Transverse colon (tissue), 4 donors: ENCODE measurements at regions of chr1 and their contacts with region 1.

Region 1: GRCh38 chr1:155172732-155173477 is at the start of gene KRTCAP2:
- DNase-seq: peak; percentile 96
- H3K4me3 ChIP-seq: peak within 1 kb of the TSS; percentile 52 to 91 (median 76)
- H3K27ac ChIP-seq: peak within 1 kb of the TSS; percentile 92 to 95 (median 93)
- H3K4me1 ChIP-seq: peaks cover 15 to 32% (median 26%) of the 10 kb centered on the region in 4 donors
- H3K27me3 ChIP-seq: peaks cover 6% of the 10 kb centered on the region
- CTCF ChIP-seq: peak; percentile 93 to 97 (median 95)
- EP300 ChIP-seq: no peak
- POLR2A ChIP-seq: peak; percentile 80
- total RNA-seq, gene KRTCAP2: 106 to 240 (median 131) TPM

Region 2: GRCh38 chr1:154358519-154358918 is 814.4 kb before region 1 on chr1:
- in situ Hi-C with region 1: no loop called
- intact Hi-C with region 1: no loop called
- DNase-seq: no peak
- H3K4me3 ChIP-seq: no peak overlapping the region
- H3K27ac ChIP-seq: no peak overlapping the region
- H3K4me1 ChIP-seq: peaks cover 0 to 8% (median 3%) of the 10 kb centered on the region in 4 donors
- H3K27me3 ChIP-seq: no peaks in the 10 kb centered on the region
- CTCF ChIP-seq: no peak
- EP300 ChIP-seq: no peak
- POLR2A ChIP-seq: no peak

Region 3: GRCh38 chr1:154906621-154907081 is 266.3 kb before region 1 on chr1:
- in situ Hi-C with region 1: loop called in 1 of 4 experiments (anchors 25 kb)
- intact Hi-C with region 1: no loop called
- DNase-seq: peak; percentile 25
- H3K4me3 ChIP-seq: no peak overlapping the region
- H3K27ac ChIP-seq: no peak overlapping the region
- H3K4me1 ChIP-seq: no peaks in the 10 kb centered on the region
- H3K27me3 ChIP-seq: no peaks in the 10 kb centered on the region
- CTCF ChIP-seq: peak; percentile 41 to 70 (median 57)
- EP300 ChIP-seq: no peak
- POLR2A ChIP-seq: no peak

Region 4: DNA sequence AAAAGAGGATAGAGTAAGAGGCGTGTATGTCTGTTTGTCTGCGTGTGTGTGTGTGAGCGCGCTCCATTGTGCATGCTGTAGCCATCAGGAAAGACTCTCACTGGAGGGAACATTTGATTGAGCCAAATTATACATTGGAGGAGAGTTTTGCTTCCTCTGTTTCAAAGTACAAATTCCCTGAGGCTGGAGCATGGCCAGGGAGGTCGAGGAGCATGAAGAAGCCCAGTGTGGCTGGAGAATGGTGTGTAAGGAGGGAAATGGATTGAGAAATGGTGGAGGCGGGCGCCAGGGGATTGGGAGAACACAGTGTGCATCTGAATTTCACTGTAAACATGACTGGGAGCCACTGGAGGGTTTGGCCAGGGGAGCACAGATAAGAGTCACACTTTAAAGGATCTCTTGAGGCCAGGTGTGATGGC is 67.3 kb before region 1 on chr1:
- in situ Hi-C with region 1: no loop called
- intact Hi-C with region 1: no loop called
- DNase-seq: peak; percentile 55
- H3K4me3 ChIP-seq: no peak overlapping the region
- H3K27ac ChIP-seq: peak overlapping the region; percentile 2 to 30 (median 12)
- H3K4me1 ChIP-seq: peaks cover 0 to 25% (median 8%) of the 10 kb centered on the region in 4 donors
- H3K27me3 ChIP-seq: no peaks in the 10 kb centered on the region
- CTCF ChIP-seq: no peak
- EP300 ChIP-seq: no peak
- POLR2A ChIP-seq: no peak

Region 5: DNA sequence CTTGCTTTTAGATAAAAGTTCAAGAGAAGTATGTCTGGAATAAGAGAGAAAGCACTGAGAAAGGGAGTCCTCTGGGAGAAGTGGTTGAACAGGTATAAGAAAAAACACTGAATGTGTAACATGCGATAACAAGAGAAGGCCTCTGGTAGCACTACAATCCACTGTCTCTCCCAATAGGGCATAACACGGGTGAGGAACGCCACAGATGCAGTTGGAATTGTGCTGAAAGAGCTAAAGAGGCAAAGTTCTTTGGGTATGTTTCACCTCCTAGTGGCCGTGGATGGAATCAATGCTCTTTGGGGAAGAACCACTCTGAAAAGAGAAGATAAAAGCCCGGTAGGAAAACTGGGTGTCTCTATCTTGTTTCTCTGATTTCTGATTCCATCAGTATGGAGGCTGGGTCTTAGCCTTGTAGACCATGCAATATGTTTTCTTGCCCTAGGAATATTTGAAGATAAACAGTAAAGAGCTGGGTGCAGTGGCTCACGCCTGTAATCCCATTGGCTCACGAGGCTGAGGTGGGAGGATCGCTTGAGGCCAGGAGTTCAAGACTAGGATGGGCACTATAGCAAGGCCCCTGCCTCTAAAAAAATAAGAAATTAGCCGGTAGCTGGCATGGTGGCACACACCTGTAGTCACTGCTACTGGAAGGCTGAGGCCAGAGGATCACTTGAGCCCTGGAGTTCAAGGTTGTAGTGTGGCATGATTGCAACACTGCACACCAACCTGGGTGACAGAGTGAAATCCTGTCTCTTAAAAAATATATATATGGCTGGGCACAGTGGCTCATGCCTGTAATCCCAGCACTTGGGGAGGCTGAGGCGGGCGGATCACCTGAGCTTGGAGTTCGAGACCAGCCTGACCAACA is 556.4 kb after region 1 on chr1:
- in situ Hi-C with region 1: no loop called
- intact Hi-C with region 1: no loop called
- DNase-seq: peak; percentile 46
- H3K4me3 ChIP-seq: no peak overlapping the region
- H3K27ac ChIP-seq: no peak overlapping the region
- H3K4me1 ChIP-seq: no peaks in the 10 kb centered on the region
- H3K27me3 ChIP-seq: no peaks in the 10 kb centered on the region
- CTCF ChIP-seq: peak; percentile 52 to 69 (median 62)
- EP300 ChIP-seq: no peak
- POLR2A ChIP-seq: no peak